AG04450 (cell line): ENCODE measurements at regions of chr6 and their contacts with region 1.

Region 1: GRCh38 chr6:35259194-35259947 is at the start of gene ZNF76:
- DNase-seq: peak; percentile 91
- H3K4me3 ChIP-seq: peak within 1 kb of the TSS; percentile 97
- H3K27ac ChIP-seq: peak within 1 kb of the TSS; percentile 92
- H3K27me3 ChIP-seq: no peaks in the 10 kb centered on the region
- CTCF ChIP-seq: no peak
- polyA plus RNA-seq, gene ZNF76: 10.2 and 14.3 TPM in 2 replicates

Region 2: GRCh38 chr6:35287671-35288396 is 28.5 kb after region 1 on chr6:
- CTCF ChIA-PET with region 1: no interaction called
- POLR2A ChIA-PET with region 1: interaction called, 12 read pairs
- DNase-seq: peak; percentile 71
- H3K4me3 ChIP-seq: no peak overlapping the region
- H3K27ac ChIP-seq: peak overlapping the region; percentile 80
- H3K27me3 ChIP-seq: no peaks in the 10 kb centered on the region
- CTCF ChIP-seq: no peak

Region 3: DNA sequence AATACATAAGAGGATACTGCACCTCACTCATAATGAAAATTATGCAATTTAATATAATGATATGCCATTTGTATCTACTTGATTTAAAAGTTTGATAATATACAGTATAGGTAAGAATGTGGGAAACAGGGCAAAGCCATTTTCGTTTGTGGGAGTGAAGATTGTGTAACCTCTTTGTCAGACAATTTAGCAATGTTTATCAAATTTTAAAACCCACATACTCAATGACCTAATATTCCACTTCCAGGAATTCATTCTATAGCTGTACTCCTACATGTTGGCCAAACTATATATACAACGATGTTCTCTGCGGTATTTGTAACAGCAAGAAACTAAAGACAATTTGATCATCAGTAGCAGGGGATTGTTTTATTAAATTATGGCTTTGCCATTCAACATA is 447.1 kb after region 1 on chr6:
- CTCF ChIA-PET with region 1: no interaction called
- POLR2A ChIA-PET with region 1: no interaction called
- DNase-seq: no peak
- H3K4me3 ChIP-seq: no peak overlapping the region
- H3K27ac ChIP-seq: no peak overlapping the region
- H3K27me3 ChIP-seq: no peaks in the 10 kb centered on the region
- CTCF ChIP-seq: no peak

Region 4: GRCh38 chr6:36123257-36124139 is 864.1 kb after region 1 on chr6:
- CTCF ChIA-PET with region 1: no interaction called
- POLR2A ChIA-PET with region 1: no interaction called
- DNase-seq: peak; percentile 33
- H3K4me3 ChIP-seq: no peak overlapping the region
- H3K27ac ChIP-seq: no peak overlapping the region
- H3K27me3 ChIP-seq: no peaks in the 10 kb centered on the region
- CTCF ChIP-seq: peak; percentile 80